Panc1 (cell line): ENCODE measurements at regions of chr2 and their contacts with region 1.

Region 1: DNA sequence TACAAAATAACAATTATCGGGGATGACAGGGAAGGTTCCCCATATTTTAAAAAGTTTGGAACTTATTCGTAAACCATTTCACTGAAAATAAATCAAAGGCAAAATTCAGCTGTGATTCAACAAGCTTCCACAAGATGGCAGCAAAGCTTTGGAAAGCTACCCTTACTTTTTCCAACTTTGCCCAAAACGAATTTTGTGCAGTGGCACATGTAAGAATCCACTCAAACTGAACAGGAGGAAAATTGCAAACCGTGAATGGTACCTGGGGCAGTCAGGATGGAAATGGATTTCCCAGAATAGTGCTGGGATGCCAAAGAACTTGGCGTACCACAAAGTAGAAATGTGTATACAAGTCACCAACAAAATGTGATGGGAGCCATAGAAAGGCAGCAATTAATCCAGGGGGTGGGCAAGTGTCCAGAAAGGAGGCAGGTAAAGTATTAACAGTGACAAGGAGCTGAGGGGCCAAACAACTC is 10.7 kb downstream of the RPL31 start:
- DNase-seq: no peak
- ATAC-seq: no peak
- H3K4me3 ChIP-seq: no peak overlapping the region
- H3K27ac ChIP-seq: peak overlapping the region; percentile 44; the same call in 1 of the 2 replicates
- H3K4me1 ChIP-seq: peaks cover 40% of the 10 kb centered on the region
- H3K27me3 ChIP-seq: no peaks in the 10 kb centered on the region
- CTCF ChIP-seq: peak; percentile 85

Region 2: GRCh38 chr2:100615471-100615870 is 397.3 kb before region 1 on chr2:
- CTCF ChIA-PET with region 1: no interaction called
- POLR2A ChIA-PET with region 1: no interaction called
- in situ Hi-C with region 1: no loop called
- intact Hi-C with region 1: no loop called
- DNase-seq: no peak
- ATAC-seq: peak; percentile 47; the same call in 1 of the 2 replicates
- H3K4me3 ChIP-seq: no peak overlapping the region
- H3K27ac ChIP-seq: no peak overlapping the region
- H3K4me1 ChIP-seq: no peaks in the 10 kb centered on the region
- H3K27me3 ChIP-seq: no peaks in the 10 kb centered on the region
- CTCF ChIP-seq: no peak

Region 3: DNA sequence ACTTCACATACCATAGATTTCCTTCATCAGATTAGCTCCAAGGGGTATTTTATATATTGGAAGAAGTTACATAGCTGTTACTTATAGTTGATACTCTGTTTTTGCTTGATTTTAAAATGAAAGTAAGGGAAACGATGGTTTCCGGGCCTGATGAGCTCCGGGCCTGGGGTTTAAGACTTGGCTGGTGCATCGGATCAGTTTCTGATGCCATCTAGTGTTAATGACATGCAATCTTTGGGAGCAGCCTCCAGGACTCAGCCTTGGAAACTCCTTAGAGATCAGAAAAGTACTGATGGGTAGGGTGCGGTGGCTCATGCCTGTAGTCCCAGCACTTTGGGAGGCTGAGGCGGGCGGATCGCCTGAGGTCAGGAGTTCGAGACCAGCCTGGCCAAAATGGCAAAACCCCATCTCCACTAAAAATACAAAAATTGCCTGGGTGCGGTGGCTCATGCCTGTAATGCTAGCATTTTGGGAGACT is 192.8 kb after region 1 on chr2:
- CTCF ChIA-PET with region 1: interaction called, 9 read pairs
- POLR2A ChIA-PET with region 1: interaction called, 5 read pairs
- in situ Hi-C with region 1: no loop called
- intact Hi-C with region 1: loop called (anchors 2 kb)
- DNase-seq: peak; percentile 71
- ATAC-seq: peak; percentile 98
- H3K4me3 ChIP-seq: peak overlapping the region; percentile 30 to 48
- H3K27ac ChIP-seq: peak overlapping the region; percentile 68
- H3K4me1 ChIP-seq: peaks cover 12% of the 10 kb centered on the region
- H3K27me3 ChIP-seq: no peaks in the 10 kb centered on the region
- CTCF ChIP-seq: peak; percentile 82